ENCODE measurements at regions of chr10 and their contacts with region 1.

Region 1: DNA sequence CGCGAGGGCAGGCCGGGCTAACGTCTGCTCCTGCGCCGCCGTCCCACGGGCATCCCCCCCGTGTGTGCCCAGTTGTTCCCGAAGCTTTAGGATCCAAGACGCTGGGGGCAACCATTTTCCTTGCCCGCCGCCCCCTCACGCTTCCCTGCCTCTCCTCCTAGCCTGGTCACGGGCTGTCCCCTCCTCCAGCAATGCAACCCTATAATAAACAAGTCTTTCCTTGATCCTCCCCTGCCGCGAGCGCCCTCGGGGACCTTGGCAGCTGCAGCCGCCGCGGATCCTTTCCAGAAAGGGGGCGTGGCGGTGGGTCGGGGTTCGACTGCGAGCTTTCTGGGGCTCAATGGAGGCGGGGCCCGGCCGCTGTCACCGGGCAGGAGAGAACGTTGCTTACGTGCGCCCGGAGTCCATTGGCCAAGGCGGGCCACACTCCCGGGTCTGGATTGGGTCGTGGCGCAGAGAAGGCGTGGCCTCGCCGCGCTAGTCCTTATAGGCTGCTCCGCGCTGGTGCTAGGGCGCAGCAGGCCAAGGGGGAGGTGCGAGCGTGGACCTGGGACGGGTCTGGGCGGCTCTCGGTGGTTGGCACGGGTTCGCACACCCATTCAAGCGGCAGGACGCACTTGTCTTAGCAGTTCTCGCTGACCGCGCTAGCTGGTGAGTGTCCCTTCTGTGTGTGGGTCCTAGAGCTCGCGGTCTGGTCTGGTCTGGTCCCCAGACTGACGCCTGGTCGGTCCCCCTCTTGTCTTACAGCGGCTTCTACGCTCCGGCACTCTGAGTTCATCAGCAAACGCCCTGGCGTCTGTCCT is at the start of gene DDIT4:
- DNase-seq: peak; percentile 99
- H3K4me3 Mint-ChIP-seq: peak within 1 kb of the TSS; percentile 99
- H3K27ac Mint-ChIP-seq: peak within 1 kb of the TSS; percentile 97
- H3K4me1 Mint-ChIP-seq: peaks cover 46% of the 10 kb centered on the region
- H3K27me3 Mint-ChIP-seq: peaks cover 5% of the 10 kb centered on the region
- total RNA-seq, gene DDIT4: 637 TPM

Region 2: DNA sequence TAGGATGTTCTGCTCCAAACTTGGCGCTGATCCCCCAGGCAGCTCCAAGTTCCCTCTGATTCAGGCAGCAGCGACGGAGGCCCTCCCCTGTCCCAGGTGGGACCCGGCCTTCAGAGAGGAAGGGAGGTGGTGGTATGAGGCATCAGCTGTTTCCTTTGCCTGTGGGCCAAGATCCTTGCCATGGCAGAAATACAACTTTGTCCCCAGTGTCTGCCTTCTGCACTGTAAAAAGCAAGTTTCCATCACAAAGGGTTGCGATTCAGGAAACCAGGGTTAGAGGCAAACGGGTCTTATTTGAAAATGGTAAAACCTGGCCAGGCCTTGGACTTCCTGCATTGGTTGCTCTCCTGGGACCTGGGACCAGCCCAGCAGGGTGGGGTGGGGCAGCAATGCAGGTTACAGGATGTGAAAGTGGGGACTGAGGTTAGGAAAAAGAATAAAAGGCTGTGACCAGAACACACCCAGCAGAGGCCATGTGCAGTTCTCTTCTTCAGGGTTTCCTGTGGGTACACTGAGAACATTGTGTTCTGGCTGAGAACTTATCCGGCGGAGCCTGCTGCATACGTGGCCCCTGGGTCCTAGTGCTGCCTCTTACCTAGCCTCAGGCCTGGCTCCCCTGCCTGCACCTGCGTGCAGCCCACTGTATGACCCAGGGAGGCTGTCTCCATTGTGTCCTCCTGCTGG is 25.0 kb before region 1 on chr10:
- CTCF ChIA-PET with region 1: interaction called, 9 read pairs
- POLR2A ChIA-PET with region 1: interaction called, 20 read pairs
- intact Hi-C with region 1: loop called (anchors 1 kb)
- DNase-seq: peak; percentile 84
- H3K4me3 Mint-ChIP-seq: peak overlapping the region; percentile 83
- H3K27ac Mint-ChIP-seq: peak overlapping the region; percentile 98
- H3K4me1 Mint-ChIP-seq: peaks cover 74% of the 10 kb centered on the region
- H3K27me3 Mint-ChIP-seq: no peaks in the 10 kb centered on the region

Region 3: GRCh38 chr10:72285972-72286521 is 12.4 kb after region 1 on chr10:
- CTCF ChIA-PET with region 1: interaction called, 64 read pairs
- POLR2A ChIA-PET with region 1: interaction called, 263 read pairs
- intact Hi-C with region 1: loop called (anchors 1 kb)
- DNase-seq: no peak
- H3K4me3 Mint-ChIP-seq: peak overlapping the region; percentile 45
- H3K27ac Mint-ChIP-seq: peak overlapping the region; percentile 78
- H3K4me1 Mint-ChIP-seq: peaks cover 32% of the 10 kb centered on the region
- H3K27me3 Mint-ChIP-seq: no peaks in the 10 kb centered on the region

Region 4: GRCh38 chr10:72292223-72292691 is 18.6 kb after region 1 on chr10:
- CTCF ChIA-PET with region 1: interaction called, 64 read pairs
- POLR2A ChIA-PET with region 1: interaction called, 263 read pairs
- intact Hi-C with region 1: loop called (anchors 1 kb)
- DNase-seq: peak; percentile 89
- H3K4me3 Mint-ChIP-seq: no peak overlapping the region
- H3K27ac Mint-ChIP-seq: peak overlapping the region; percentile 100
- H3K4me1 Mint-ChIP-seq: peaks cover 59% of the 10 kb centered on the region
- H3K27me3 Mint-ChIP-seq: peaks cover 3% of the 10 kb centered on the region

Region 5: GRCh38 chr10:72319416-72320254 is 46.0 kb after region 1 on chr10:
- CTCF ChIA-PET with region 1: interaction called, 26 read pairs
- POLR2A ChIA-PET with region 1: interaction called, 120 read pairs
- intact Hi-C with region 1: loop called (anchors 2 kb)
- DNase-seq: peak; percentile 93
- H3K4me3 Mint-ChIP-seq: peak overlapping the region; percentile 85
- H3K27ac Mint-ChIP-seq: peak overlapping the region; percentile 100
- H3K4me1 Mint-ChIP-seq: peaks cover 79% of the 10 kb centered on the region
- H3K27me3 Mint-ChIP-seq: no peaks in the 10 kb centered on the region

Region 6: DNA sequence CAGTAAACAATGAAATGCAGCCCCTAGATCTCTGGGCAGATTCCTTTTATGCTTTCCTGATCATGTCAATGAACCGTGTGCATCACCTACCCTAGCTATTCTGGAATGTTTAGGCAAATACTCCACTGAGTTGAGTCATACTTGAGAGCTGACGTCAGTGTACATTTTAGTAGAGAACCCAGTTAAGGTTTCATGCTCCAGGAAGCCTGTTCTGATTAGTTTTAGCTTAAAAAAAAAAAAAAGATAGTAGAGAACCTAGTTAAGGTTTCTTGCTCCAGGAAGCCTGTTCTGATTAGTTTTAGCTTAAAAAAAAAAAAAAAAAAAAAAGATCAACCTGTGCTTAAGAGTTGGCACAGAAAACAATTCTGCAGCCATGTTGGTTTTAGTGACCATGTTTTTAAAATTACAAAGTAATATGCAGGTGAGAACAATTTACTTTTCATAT is 414.6 kb after region 1 on chr10:
- CTCF ChIA-PET with region 1: no interaction called
- POLR2A ChIA-PET with region 1: no interaction called
- intact Hi-C with region 1: no loop called
- DNase-seq: no peak
- H3K4me3 Mint-ChIP-seq: no peak overlapping the region
- H3K27ac Mint-ChIP-seq: no peak overlapping the region
- H3K4me1 Mint-ChIP-seq: peaks cover 17% of the 10 kb centered on the region
- H3K27me3 Mint-ChIP-seq: peaks cover 3% of the 10 kb centered on the region